Endothelial cell of umbilical vein (primary cell): ENCODE measurements at regions of chr12 and their contacts with region 1.

Region 1: DNA sequence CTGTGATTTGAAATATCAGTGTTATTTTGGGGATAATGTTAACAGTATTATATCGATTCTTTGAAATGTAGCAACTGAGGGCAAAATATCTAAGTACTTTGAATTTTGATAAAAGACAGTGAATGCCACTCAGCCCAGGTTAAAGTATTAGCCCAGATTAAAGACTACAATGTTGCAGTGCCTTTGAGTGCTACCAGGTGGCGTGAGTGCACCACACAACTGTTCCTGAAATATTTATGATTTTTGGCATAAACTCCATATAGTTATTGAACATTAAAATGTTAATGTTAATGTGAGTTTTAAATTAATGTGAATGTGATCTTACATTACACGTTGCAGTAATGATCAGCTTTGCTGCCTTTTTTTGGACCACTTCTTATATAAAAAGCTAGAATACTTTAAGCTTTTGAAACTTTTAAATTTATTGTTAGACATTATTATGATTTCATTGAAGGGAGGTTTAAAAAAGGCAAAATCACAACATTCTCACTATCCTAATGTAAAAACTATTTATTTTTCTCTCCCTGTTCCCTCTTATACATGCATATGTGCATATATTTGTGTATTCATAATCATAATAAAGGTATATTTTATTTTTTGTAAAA is 22.5 kb downstream of the MRPS35 start:
- DNase-seq: peak; percentile 51
- H3K4me3 ChIP-seq: no peak overlapping the region
- H3K27ac ChIP-seq: no peak overlapping the region
- H3K4me1 ChIP-seq: no peaks in the 10 kb centered on the region
- H3K27me3 ChIP-seq: no peaks in the 10 kb centered on the region
- CTCF ChIP-seq: peak; percentile 72 to 76
- POLR2A ChIP-seq: no peak

Region 2: GRCh38 chr12:27840244-27840999 is 107.3 kb after region 1 on chr12:
- CTCF ChIA-PET with region 1: interaction called, 43 read pairs
- POLR2A ChIA-PET with region 1: no interaction called
- dilution Hi-C with region 1: no loop called
- intact Hi-C with region 1: loop called (anchors 1 kb)
- DNase-seq: peak; percentile 33
- H3K4me3 ChIP-seq: no peak overlapping the region
- H3K27ac ChIP-seq: no peak overlapping the region
- H3K4me1 ChIP-seq: peaks cover 12% of the 10 kb centered on the region
- H3K27me3 ChIP-seq: peaks cover 0 to 1% of the 10 kb centered on the region in 2 experiments
- CTCF ChIP-seq: peak; percentile 6 to 37
- POLR2A ChIP-seq: no peak

Region 3: GRCh38 chr12:28172434-28173030 is 439.4 kb after region 1 on chr12:
- CTCF ChIA-PET with region 1: interaction called, 31 read pairs
- POLR2A ChIA-PET with region 1: no interaction called
- dilution Hi-C with region 1: no loop called
- intact Hi-C with region 1: loop called (anchors 1 kb)
- DNase-seq: peak; percentile 73
- H3K4me3 ChIP-seq: no peak overlapping the region
- H3K27ac ChIP-seq: no peak overlapping the region
- H3K4me1 ChIP-seq: no peaks in the 10 kb centered on the region
- H3K27me3 ChIP-seq: no peaks in the 10 kb centered on the region
- CTCF ChIP-seq: peak; percentile 56 to 62
- POLR2A ChIP-seq: no peak

Region 4: GRCh38 chr12:28872654-28873268 is 1139.6 kb after region 1 on chr12:
- CTCF ChIA-PET with region 1: interaction called, 19 read pairs
- POLR2A ChIA-PET with region 1: no interaction called
- dilution Hi-C with region 1: no loop called
- intact Hi-C with region 1: loop called (anchors 1 kb)
- DNase-seq: peak; percentile 70
- H3K4me3 ChIP-seq: no peak overlapping the region
- H3K27ac ChIP-seq: no peak overlapping the region
- H3K4me1 ChIP-seq: no peaks in the 10 kb centered on the region
- H3K27me3 ChIP-seq: no peaks in the 10 kb centered on the region
- CTCF ChIP-seq: peak; percentile 69 to 74
- POLR2A ChIP-seq: no peak

Region 5: GRCh38 chr12:28998637-28999120 is 1265.5 kb after region 1 on chr12:
- CTCF ChIA-PET with region 1: interaction called, 9 read pairs
- POLR2A ChIA-PET with region 1: no interaction called
- dilution Hi-C with region 1: no loop called
- intact Hi-C with region 1: loop called (anchors 1 kb)
- DNase-seq: peak; percentile 56
- H3K4me3 ChIP-seq: no peak overlapping the region
- H3K27ac ChIP-seq: no peak overlapping the region
- H3K4me1 ChIP-seq: no peaks in the 10 kb centered on the region
- H3K27me3 ChIP-seq: no peaks in the 10 kb centered on the region
- CTCF ChIP-seq: peak; percentile 37 to 53
- POLR2A ChIP-seq: no peak